CD4-positive, alpha-beta T cell (primary cell): ENCODE measurements at regions of chr1 and their contacts with region 1.

Region 1: DNA sequence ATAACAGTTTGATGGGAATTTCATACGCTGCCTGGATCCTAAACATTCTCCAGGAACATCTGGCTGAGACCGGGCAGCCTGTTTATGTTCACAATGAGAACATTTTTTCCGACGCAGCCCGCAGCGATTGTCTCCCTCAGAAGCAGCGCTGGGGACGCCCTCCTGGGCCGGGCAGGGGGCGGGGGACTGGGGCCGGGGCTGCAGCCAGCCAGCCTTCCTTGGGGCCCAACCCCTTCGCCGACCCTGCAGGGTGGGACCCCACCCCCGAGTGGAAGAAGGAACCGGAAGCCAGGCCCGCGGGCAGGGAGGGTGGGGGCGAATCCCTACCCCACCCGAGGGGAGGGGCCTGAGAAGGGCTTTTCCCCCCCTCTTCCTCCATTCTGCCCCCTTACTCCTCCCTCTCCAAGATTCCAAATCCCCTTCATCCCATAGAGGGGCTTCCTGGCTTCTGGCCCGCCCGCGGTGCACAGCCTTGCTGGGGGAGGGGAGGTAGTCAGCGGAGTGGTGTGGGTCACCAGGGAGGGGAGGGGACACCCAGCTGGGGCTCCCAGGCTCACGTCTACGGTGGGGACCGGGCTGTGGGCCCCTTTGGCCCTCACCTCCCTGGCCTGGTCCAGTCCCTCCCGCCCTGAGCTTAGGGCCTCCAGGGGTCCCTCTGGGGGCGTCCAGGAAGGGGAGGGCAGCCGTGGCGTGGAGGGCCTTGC is 60.6 kb downstream of the WNT9A start:
- DNase-seq: peak in 10 of 14 experiments; percentile 25 to 66 (median 48)
- ATAC-seq: peak; percentile 41
- H3K4me3 ChIP-seq: peak overlapping the region; percentile 44
- H3K4me3 Mint-ChIP-seq: peak overlapping the region; percentile 67
- H3K27ac ChIP-seq: peak overlapping the region in 1 of 2 donors; percentile 64
- H3K27ac Mint-ChIP-seq: peak overlapping the region; percentile 87
- H3K4me1 ChIP-seq: peaks cover 69% of the 10 kb centered on the region
- H3K4me1 Mint-ChIP-seq: peaks cover 39% of the 10 kb centered on the region
- H3K27me3 ChIP-seq: no peaks in the 10 kb centered on the region
- H3K27me3 Mint-ChIP-seq: no peaks in the 10 kb centered on the region
- CTCF ChIP-seq: no peak

Region 2: GRCh38 chr1:227734856-227735538 is 152.1 kb before region 1 on chr1 and contains the starts of genes JMJD4 and SNAP47:
- CTCF ChIA-PET with region 1: no interaction called
- POLR2A ChIA-PET with region 1: no interaction called
- intact Hi-C with region 1: loop called in 1 of 2 experiments (anchors 5 kb)
- DNase-seq: peak; percentile 86 to 96 (median 92)
- ATAC-seq: peak; percentile 90
- H3K4me3 ChIP-seq: peak within 1 kb of the TSS; percentile 71
- H3K4me3 Mint-ChIP-seq: peak within 1 kb of the TSS; percentile 92
- H3K27ac ChIP-seq: peak within 1 kb of the TSS in 1 of 2 donors; percentile 69
- H3K27ac Mint-ChIP-seq: peak within 1 kb of the TSS; percentile 83
- H3K4me1 ChIP-seq: peaks cover 37% of the 10 kb centered on the region
- H3K4me1 Mint-ChIP-seq: peaks cover 56% of the 10 kb centered on the region
- H3K27me3 ChIP-seq: no peaks in the 10 kb centered on the region
- H3K27me3 Mint-ChIP-seq: no peaks in the 10 kb centered on the region
- CTCF ChIP-seq: no peak
- total RNA-seq, gene JMJD4: 11.4 to 11.9 TPM
- total RNA-seq, gene SNAP47: 12.8 to 14.0 TPM

Region 3: DNA sequence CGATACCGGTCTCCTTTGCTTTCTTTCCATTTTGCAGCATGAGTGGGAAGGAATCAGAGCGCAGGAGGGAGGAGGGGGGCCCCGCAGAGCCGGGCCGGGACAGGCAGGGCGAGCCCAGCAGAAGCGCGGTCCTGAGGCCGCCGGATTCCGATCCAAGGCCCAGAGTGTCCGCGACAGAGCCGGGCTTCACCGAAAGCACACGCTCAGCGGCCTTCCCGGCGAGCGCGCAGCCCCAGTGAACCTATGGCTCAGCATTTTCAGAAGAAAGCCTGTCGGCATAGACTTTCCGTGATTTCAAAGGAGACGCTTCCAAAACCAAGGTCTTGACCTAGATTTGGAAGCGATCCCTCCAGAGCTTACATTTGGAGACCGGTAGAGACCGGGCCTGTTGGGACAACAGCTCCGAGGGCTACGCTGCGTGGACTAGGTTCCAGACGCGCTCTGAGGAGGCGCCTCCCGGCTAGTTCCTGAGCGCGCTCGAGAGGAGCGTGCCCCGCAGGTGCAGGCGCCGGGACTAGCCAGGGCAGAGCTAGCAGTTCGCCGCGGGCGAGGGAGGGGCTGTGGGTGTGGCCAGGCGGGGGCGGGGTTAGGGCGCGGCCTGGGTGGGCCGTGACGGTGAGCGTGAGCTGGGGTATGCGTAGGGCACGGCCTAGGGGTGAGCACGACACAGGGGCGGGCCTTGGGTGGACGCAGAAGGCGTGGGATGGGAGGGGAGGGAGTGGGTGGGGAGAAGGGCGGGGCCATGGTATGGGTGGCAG is 99.5 kb before region 1 on chr1:
- CTCF ChIA-PET with region 1: no interaction called
- POLR2A ChIA-PET with region 1: no interaction called
- intact Hi-C with region 1: loop called in 1 of 2 experiments (anchors 5 kb)
- DNase-seq: peak; percentile 94 to 99 (median 96)
- ATAC-seq: peak; percentile 92
- H3K4me3 ChIP-seq: peak overlapping the region; percentile 74
- H3K4me3 Mint-ChIP-seq: peak overlapping the region; percentile 89
- H3K27ac ChIP-seq: peak overlapping the region in 1 of 2 donors; percentile 11
- H3K27ac Mint-ChIP-seq: peak overlapping the region; percentile 82
- H3K4me1 ChIP-seq: peaks cover 39% of the 10 kb centered on the region
- H3K4me1 Mint-ChIP-seq: peaks cover 34% of the 10 kb centered on the region
- H3K27me3 ChIP-seq: no peaks in the 10 kb centered on the region
- H3K27me3 Mint-ChIP-seq: no peaks in the 10 kb centered on the region
- CTCF ChIP-seq: no peak

Region 4: GRCh38 chr1:227934476-227935313 is 47.5 kb after region 1 on chr1:
- CTCF ChIA-PET with region 1: no interaction called
- POLR2A ChIA-PET with region 1: no interaction called
- intact Hi-C with region 1: no loop called
- DNase-seq: peak in 5 of 14 experiments; percentile 13 to 56 (median 21)
- ATAC-seq: peak; percentile 72
- H3K4me3 ChIP-seq: no peak overlapping the region
- H3K4me3 Mint-ChIP-seq: no peak overlapping the region
- H3K27ac ChIP-seq: no peak overlapping the region
- H3K27ac Mint-ChIP-seq: no peak overlapping the region
- H3K4me1 ChIP-seq: no peaks in the 10 kb centered on the region
- H3K4me1 Mint-ChIP-seq: peaks cover 9% of the 10 kb centered on the region
- H3K27me3 ChIP-seq: no peaks in the 10 kb centered on the region
- H3K27me3 Mint-ChIP-seq: peaks cover 8% of the 10 kb centered on the region
- CTCF ChIP-seq: no peak

Region 5: DNA sequence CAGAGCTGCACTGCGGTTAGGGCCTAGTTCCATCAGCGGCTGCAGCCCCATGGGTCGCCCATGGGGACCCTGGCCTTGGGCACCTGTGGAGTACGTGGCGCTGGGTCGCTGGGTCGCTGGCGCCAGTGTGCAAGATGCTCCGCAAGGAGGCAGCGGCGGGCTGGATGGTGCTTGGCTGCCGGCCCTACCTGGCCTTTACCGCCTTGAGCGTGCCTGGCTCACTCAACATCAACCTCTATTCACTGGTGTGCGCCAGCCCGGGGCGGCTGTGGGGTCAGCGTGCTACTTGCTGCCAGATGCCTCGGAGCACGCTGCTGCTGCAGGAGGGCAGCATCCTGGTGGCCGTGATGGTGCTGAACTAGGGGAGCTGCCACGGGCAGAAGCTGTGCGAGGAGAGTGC is 763.0 kb after region 1 on chr1:
- CTCF ChIA-PET with region 1: no interaction called
- POLR2A ChIA-PET with region 1: no interaction called
- intact Hi-C with region 1: loop called in 1 of 2 experiments (anchors 10 kb)
- DNase-seq: peak in 3 of 14 experiments; percentile 19 to 31 (median 23)
- ATAC-seq: no peak
- H3K4me3 ChIP-seq: no peak overlapping the region
- H3K4me3 Mint-ChIP-seq: no peak overlapping the region
- H3K27ac ChIP-seq: no peak overlapping the region
- H3K27ac Mint-ChIP-seq: no peak overlapping the region
- H3K4me1 ChIP-seq: peaks cover 25% of the 10 kb centered on the region
- H3K4me1 Mint-ChIP-seq: peaks cover 38% of the 10 kb centered on the region
- H3K27me3 ChIP-seq: peaks cover 46 to 81% of the 10 kb centered on the region in 2 experiments
- H3K27me3 Mint-ChIP-seq: peaks cover 72% of the 10 kb centered on the region
- CTCF ChIP-seq: no peak